Caco-2 (cell line): ENCODE measurements at regions of chr17 and their contacts with region 1.

Region 1: GRCh38 chr17:57747221-57748017 is 2.3 kb upstream of the CCDC182 start:
- DNase-seq: peak in 1 of 2 experiments; percentile 51
- H3K4me3 ChIP-seq: no peak overlapping the region
- H3K4me3 Mint-ChIP-seq: no peak overlapping the region
- H3K27ac Mint-ChIP-seq: no peak overlapping the region
- H3K4me1 ChIP-seq: no peaks in the 10 kb centered on the region
- H3K4me1 Mint-ChIP-seq: no peaks in the 10 kb centered on the region
- H3K27me3 ChIP-seq: no peaks in the 10 kb centered on the region; the same call in 1 of the 2 replicates
- H3K27me3 Mint-ChIP-seq: peaks cover 16% of the 10 kb centered on the region
- CTCF ChIP-seq: peak; percentile 72 to 83

Region 2: DNA sequence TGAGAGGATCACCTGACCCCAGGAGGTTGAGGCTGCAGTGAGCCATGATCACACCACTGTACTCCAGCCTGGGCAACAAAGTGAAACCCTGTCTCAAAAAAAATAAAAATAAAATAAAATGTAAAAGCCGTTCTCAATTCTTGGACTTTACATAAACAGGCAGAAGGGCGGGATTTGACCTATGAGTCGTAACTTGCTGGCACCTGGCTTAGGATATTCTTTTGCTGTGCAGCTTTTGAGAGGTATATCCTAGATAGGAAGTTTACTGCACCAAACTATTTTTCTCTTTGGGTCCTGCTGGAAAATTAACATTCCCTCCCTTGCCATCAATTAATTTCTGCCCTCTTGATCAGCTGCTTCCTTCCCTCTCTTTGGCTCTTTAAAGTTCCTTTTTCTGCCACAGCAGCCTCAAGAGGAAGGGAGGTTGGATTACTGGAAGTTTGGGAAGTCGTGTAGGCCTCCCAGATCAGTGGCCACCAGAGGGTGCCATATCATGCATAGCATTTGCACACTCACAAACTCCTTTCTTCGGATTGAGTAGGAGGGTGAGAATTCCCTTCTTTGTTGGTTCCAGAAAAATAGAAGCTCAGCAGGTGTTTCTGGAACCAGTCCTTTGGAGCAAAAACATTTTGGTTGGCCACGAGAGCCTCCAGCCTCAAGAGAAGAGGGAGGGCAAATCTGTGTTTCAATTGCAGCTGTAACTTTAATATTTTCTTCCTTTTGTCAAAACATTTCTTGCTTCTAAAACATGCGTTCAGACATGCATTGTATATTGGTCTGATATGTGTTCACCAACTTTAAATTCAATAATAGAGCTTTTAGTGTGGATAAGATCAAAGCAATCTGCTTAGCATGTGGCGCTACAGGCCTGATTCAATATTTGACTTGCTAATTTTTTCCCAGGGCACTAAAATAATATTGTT is 149.6 kb before region 1 on chr17:
- CTCF ChIA-PET with region 1: interaction called, 5 read pairs
- POLR2A ChIA-PET with region 1: no interaction called
- intact Hi-C with region 1: loop called (anchors 1 kb)
- DNase-seq: peak; percentile 60 to 76
- H3K4me3 ChIP-seq: no peak overlapping the region
- H3K4me3 Mint-ChIP-seq: no peak overlapping the region
- H3K27ac Mint-ChIP-seq: peak overlapping the region; percentile 5
- H3K4me1 ChIP-seq: no peaks in the 10 kb centered on the region
- H3K4me1 Mint-ChIP-seq: no peaks in the 10 kb centered on the region
- H3K27me3 ChIP-seq: no peaks in the 10 kb centered on the region
- H3K27me3 Mint-ChIP-seq: no peaks in the 10 kb centered on the region
- CTCF ChIP-seq: peak; percentile 82 to 90

Region 3: GRCh38 chr17:57833179-57833939 is 85.9 kb after region 1 on chr17:
- CTCF ChIA-PET with region 1: interaction called, 6 read pairs
- POLR2A ChIA-PET with region 1: no interaction called
- intact Hi-C with region 1: loop called (anchors 10 kb)
- DNase-seq: peak; percentile 65 to 68
- H3K4me3 ChIP-seq: no peak overlapping the region
- H3K4me3 Mint-ChIP-seq: no peak overlapping the region
- H3K27ac Mint-ChIP-seq: no peak overlapping the region
- H3K4me1 ChIP-seq: peaks cover 5% of the 10 kb centered on the region; the same call in 1 of the 2 replicates
- H3K4me1 Mint-ChIP-seq: peaks cover 6% of the 10 kb centered on the region
- H3K27me3 ChIP-seq: no peaks in the 10 kb centered on the region
- H3K27me3 Mint-ChIP-seq: no peaks in the 10 kb centered on the region
- CTCF ChIP-seq: peak; percentile 91 to 93